HEK293 (cell line): ENCODE measurements at regions of chr17 and their contacts with region 1.

Region 1: GRCh38 chr17:46831573-46832330 is 13.3 kb upstream of the WNT3 start:
- H3K4me3 ChIP-seq: no peak overlapping the region
- H3K27ac ChIP-seq: no peak overlapping the region
- H3K4me1 ChIP-seq: no peaks in the 10 kb centered on the region
- CTCF ChIP-seq: no peak

Region 2: DNA sequence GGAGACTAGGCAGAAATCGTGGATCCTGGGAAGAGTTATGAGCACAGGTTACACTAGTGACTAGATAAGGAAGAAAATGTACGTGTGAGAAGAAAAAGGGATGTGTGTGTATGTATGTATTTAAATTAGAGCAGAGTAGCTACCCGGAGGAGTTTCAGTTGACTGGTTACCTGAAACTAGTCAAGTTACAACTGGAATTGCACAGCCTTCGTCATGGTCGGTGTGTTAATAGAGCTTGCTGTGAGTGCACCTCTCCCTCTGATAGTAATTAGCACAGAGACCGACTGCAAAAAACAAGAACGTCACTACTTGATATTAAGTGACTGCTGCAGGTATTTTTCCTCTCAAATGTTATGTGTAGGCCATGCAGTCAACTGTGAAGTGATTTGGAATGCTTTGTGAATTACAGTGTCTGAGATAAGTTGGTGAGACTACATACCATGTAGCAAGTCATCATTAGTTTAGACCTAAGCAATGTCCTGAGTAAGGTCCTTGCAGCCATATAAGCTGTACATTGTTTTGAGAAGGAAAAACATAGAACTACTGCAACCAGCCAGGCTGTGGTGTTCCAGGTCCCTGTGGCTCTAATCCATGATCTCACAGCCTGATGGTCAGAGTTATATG is 109.0 kb before region 1 on chr17:
- CTCF ChIA-PET with region 1: no interaction called
- POLR2A ChIA-PET with region 1: no interaction called
- H3K4me3 ChIP-seq: no peak overlapping the region
- H3K27ac ChIP-seq: no peak overlapping the region
- H3K4me1 ChIP-seq: peaks cover 5% of the 10 kb centered on the region; the same call in 1 of the 2 replicates
- CTCF ChIP-seq: no peak

Region 3: DNA sequence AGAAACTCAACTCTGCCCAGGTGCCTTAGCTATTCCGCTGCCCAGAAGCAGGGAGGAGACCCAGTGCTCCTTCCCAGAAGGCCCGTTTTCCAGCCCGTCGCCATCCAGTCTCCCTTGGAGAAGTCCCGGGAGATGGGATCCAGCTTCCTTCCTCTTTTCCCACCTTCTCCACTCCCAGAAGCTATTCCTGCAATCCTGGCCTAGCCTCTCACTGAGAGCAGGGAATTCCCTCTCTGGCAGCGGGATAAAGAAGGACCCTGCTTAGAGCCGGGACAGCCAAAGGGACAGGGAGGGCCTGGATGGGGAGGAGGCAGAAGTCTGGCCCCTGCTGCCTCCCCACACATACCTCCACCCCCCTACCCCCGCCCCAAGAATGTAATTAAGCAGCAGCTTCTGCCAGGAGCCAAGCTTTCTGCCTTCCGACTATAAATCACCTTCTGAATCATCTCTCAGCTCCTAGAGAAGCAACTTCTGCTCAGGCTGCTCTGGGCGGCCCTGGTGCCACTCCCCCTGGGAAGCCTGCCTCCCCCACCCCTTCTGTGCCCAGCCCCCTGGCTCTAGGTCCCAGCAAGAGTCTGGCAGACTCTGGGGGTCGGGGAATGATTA is 19.7 kb before region 1 on chr17:
- CTCF ChIA-PET with region 1: interaction called, 11 read pairs
- POLR2A ChIA-PET with region 1: no interaction called
- H3K4me3 ChIP-seq: no peak overlapping the region
- H3K27ac ChIP-seq: no peak overlapping the region
- H3K4me1 ChIP-seq: no peaks in the 10 kb centered on the region
- CTCF ChIP-seq: no peak